ENCODE measurements at regions of chr6 and their contacts with region 1.

Region 1: DNA sequence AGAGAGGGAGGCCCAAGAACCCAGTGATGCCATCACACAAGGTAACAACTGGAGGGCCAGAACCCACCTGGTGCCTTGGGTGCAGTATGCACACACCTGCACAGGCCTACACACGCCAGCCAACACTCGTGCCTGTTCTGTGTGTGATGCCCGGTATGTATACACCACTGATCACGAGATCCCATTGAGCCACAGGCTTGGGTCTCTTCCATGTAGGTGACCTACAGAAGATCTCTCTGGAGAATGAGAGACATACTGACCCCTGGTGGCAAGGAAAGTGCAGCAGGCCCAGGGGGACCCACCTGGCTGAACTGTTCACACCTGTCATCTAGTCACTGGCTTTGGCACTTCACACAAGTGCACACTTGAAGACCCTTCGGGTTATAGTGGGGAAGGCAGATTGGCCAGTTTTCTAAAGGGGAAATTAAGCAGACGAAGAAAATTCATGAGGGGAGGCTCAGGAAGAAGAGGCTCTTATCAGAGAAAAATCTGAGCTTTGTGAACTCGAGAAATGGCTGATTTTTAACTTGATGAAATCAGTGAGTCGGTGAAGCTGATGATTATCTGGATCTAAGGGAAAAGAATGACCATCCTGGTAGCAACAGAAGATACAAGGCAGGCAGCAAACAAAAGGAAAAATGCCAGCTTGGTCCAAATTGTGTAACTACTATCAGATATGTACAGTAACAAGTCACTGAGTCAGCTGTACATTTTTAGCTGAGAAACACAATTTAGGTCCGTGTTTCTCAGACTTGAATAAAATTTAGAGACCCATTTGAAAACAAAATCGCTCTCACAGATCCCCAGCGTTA is 69.1 kb upstream of the PBOV1 start:
- DNase-seq: peak; percentile 48
- H3K4me3 ChIP-seq: no peak overlapping the region
- H3K27ac ChIP-seq: no peak overlapping the region
- H3K4me1 ChIP-seq: no peaks in the 10 kb centered on the region
- CTCF ChIP-seq: peak; percentile 81

Region 2: DNA sequence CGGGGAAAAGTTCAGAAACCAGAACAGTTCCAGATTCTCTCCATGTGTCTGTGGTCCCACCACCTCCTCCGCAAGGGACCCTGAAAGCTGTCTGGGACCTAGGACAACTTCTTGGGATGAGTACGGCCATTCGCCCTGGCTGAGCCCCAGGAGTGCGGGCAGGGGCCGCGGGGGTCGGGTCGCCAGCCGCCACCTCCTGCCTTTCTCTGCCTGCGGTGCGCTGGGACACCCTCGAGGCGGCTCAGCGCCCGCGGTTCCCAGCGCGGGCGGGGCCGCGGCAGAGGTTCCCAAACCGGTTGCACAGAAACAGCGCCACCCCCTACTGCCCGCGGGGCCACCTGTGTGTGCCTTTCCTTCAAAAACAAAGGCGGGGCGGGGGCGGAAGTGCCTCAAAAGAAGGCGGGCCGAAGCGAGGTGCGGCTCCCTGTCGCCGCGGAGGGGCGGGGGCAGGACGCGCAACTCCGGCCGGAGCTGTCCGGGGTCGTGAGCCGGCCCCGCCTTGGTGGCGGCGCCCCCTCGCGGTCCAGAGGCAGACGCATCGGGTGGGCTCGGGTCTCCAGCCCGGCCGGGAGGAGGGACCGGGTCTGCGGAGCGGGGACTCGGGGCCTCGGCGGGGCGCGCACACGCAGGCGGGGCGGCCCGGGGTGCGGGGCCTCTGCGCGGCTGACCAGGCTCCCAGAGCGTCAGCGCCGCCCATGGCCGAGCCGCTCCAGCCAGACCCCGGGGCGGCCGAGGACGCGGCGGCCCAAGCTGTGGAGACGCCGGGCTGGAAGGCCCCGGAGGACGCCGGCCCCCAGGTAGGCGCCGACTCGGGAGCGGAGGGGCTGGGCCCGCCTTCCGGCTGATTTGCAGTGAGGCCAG is 116.7 kb after region 1 on chr6 and contains the start of gene HEBP2:
- CTCF ChIA-PET with region 1: no interaction called
- POLR2A ChIA-PET with region 1: no interaction called
- intact Hi-C with region 1: loop called (anchors 5 kb)
- DNase-seq: peak; percentile 97
- H3K4me3 ChIP-seq: peak within 1 kb of the TSS; percentile 84
- H3K27ac ChIP-seq: peak within 1 kb of the TSS; percentile 43
- H3K4me1 ChIP-seq: peaks cover 20% of the 10 kb centered on the region
- CTCF ChIP-seq: peak; percentile 76
- total RNA-seq, gene HEBP2: 14.0 and 25.0 TPM in 2 replicates

Region 3: GRCh38 chr6:138517635-138518034 is 230.3 kb after region 1 on chr6:
- CTCF ChIA-PET with region 1: no interaction called
- POLR2A ChIA-PET with region 1: no interaction called
- intact Hi-C with region 1: loop called (anchors 5 kb)
- DNase-seq: peak; percentile 76
- H3K4me3 ChIP-seq: no peak overlapping the region
- H3K27ac ChIP-seq: no peak overlapping the region
- H3K4me1 ChIP-seq: peaks cover 5% of the 10 kb centered on the region
- CTCF ChIP-seq: peak; percentile 85

Measured in OCI-LY7 (cell line).